ENCODE measurements at regions of chr18 and their contacts with region 1.

Region 1: DNA sequence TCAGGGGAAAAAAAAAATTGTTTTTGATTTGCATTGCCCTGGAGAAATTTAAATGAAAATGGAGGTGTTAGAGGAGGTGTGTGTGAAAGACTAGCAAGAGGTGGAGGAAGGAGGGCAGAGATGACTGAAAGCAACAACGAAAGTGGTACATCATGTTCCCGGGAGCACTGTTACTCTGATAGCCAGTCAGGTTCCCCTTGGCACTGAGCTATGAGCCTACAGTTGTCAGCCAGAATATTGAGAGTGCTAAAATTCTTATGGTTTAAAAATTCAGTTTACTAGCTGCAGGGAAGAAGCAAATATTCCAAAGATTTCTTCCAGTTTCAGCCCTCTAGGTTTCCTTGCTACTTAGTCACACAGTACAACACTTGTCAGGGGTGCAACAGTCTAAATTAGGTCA is 366.7 kb upstream of the DLGAP1 start:
- DNase-seq: no peak
- ATAC-seq: no peak
- H3K4me3 ChIP-seq: no peak overlapping the region
- H3K27ac ChIP-seq: no peak overlapping the region
- H3K4me1 ChIP-seq: no peaks in the 10 kb centered on the region
- H3K27me3 ChIP-seq: no peaks in the 10 kb centered on the region
- CTCF ChIP-seq: no peak

Region 2: DNA sequence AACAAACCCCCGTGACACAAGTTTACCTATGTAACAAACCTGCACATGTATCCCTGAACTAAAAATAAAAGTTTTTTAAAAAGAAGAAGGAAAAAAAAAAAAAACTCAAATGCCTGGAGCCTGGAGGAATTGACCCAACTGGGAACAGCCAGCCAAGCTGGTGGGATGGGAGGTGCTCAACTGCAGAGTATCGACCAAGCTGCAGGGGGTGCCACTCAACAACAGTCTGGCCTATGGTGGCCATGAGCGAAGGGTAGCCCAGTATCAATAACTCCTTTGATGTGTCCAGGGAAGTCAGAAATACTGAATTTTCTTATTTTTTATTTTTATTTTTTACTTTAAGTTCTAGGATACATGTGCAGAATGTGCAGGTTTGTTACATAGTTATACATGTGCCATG is 56.4 kb before region 1 on chr18:
- intact Hi-C with region 1: loop called in 1 of 3 experiments (anchors 10 kb)
- DNase-seq: no peak
- ATAC-seq: no peak
- H3K4me3 ChIP-seq: no peak overlapping the region
- H3K27ac ChIP-seq: no peak overlapping the region
- H3K4me1 ChIP-seq: no peaks in the 10 kb centered on the region
- H3K27me3 ChIP-seq: no peaks in the 10 kb centered on the region
- CTCF ChIP-seq: no peak

Region 3: DNA sequence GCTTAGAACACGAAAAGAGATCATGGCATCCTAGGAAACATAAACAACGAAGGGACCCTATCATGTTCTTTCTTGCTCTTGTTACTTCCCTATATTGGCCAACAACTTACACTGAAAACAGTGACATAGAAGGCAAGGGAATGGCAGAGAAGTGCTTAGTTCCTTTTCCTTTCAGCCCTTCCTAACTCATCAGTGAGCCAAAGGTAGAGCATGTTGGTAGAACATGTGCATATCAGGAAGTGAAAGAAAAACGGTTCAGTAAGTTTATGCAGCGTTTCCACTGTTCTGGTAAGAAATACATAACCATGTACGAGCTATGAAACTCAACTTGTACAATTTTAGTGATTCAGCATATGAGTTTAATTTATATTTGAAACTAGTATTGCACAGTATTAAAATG is 353.6 kb after region 1 on chr18:
- intact Hi-C with region 1: no loop called
- DNase-seq: no peak
- ATAC-seq: no peak
- H3K4me3 ChIP-seq: no peak overlapping the region
- H3K27ac ChIP-seq: no peak overlapping the region
- H3K4me1 ChIP-seq: no peaks in the 10 kb centered on the region
- H3K27me3 ChIP-seq: no peaks in the 10 kb centered on the region
- CTCF ChIP-seq: no peak